CD14-positive monocyte (primary cell): ENCODE measurements at regions of chr1 and their contacts with region 1.

Region 1: DNA sequence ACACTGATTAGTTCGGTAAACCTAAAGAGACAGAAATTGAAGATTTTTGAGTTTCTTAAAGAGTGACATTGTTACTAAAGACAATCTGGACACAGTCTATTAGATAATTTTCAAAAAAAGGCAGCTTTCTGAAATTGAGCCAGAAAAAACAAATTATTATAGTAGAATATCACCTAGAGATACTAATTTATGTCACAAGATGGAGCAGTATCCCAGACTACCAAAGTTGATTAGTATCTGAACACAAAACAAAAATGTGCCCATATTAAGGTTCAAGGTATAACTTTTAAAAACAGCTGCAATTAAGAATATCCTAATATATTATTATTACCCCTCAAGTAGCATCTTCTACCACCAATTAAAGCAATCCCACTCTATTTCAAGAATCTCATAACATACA is 40.5 kb upstream of the SYT2 start:
- DNase-seq: no peak
- H3K4me3 ChIP-seq: no peak overlapping the region
- H3K4me3 Mint-ChIP-seq: no peak overlapping the region
- H3K27ac ChIP-seq: no peak overlapping the region
- H3K27ac Mint-ChIP-seq: no peak overlapping the region
- H3K4me1 ChIP-seq: peaks cover 2 to 8% of the 10 kb centered on the region in 2 donors
- H3K4me1 Mint-ChIP-seq: peaks cover 18% of the 10 kb centered on the region
- H3K27me3 ChIP-seq: no peaks in the 10 kb centered on the region
- H3K27me3 Mint-ChIP-seq: no peaks in the 10 kb centered on the region
- CTCF ChIP-seq: peak; percentile 12

Region 2: DNA sequence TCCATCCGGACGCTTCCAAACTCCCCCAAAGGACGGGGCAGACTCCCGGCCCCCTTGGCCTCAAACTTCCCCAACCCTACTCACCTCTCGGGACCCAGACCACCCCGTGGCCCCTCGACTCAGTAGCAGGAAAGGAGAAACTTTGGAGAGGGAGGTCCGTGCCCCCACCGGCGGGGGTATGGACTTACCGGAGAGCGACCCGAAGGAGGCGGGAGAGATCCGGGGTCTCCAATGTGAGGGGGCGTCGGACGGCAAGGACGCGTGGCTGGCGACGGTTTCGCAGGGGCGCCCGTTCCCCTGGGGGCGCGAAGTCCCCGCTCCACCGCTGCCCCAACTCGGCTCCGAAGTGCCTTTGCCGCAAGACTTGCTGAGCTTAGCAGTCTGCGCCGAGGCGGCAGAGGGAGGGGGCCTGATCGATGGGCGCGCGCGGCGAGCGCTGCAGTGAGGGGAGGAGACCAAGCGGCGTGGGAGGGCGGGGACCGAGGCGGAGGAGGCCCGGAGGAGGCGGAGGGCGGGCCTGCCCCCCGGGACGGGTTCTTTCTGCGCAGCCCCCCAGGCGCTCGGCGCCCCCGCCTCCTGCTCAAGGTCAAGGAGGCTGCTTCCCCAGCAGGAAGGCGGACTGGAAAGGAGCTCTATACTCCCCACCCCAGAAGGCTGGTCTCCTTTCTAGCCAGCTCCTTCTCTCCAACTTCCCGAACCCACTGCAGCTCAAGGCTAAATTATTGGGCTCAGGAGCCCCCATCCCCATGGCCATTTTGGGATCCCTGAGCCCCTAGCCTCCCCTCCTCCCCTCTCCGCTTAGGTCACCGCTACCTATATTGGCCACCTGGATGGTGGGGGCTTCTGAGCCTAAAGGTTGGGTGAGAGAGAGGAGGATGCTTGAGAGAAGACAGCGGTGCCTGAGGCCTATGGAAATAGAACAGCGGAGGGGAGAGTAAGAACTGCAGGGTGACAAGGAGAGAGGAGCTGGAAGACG is 40.4 kb before region 1 on chr1 and contains the start of gene SYT2:
- intact Hi-C with region 1: no loop called
- DNase-seq: no peak
- H3K4me3 ChIP-seq: no peak within 1 kb of the TSS
- H3K4me3 Mint-ChIP-seq: peak within 1 kb of the TSS in 1 of 2 donors; percentile 72
- H3K27ac ChIP-seq: no peak within 1 kb of the TSS
- H3K27ac Mint-ChIP-seq: no peak within 1 kb of the TSS
- H3K4me1 ChIP-seq: no peaks in the 10 kb centered on the region
- H3K4me1 Mint-ChIP-seq: peaks cover 2% of the 10 kb centered on the region
- H3K27me3 ChIP-seq: peaks cover 73 to 95% of the 10 kb centered on the region in 2 donors
- H3K27me3 Mint-ChIP-seq: peaks cover 88 to 95% (median 92%) of the 10 kb centered on the region in 3 donors
- CTCF ChIP-seq: no peak
- polyA plus RNA-seq, gene SYT2: not detected

Region 3: GRCh38 chr1:202791077-202791747 is 40.5 kb after region 1 on chr1:
- intact Hi-C with region 1: no loop called
- DNase-seq: no peak
- H3K4me3 ChIP-seq: no peak overlapping the region
- H3K4me3 Mint-ChIP-seq: no peak overlapping the region
- H3K27ac ChIP-seq: no peak overlapping the region
- H3K27ac Mint-ChIP-seq: peak overlapping the region in 2 of 7 donors; percentile 35 to 50
- H3K4me1 ChIP-seq: no peaks in the 10 kb centered on the region
- H3K4me1 Mint-ChIP-seq: peaks cover 8% of the 10 kb centered on the region
- H3K27me3 ChIP-seq: no peaks in the 10 kb centered on the region
- H3K27me3 Mint-ChIP-seq: peaks cover 0 to 1% (median 0%) of the 10 kb centered on the region in 3 donors
- CTCF ChIP-seq: no peak

Region 4: DNA sequence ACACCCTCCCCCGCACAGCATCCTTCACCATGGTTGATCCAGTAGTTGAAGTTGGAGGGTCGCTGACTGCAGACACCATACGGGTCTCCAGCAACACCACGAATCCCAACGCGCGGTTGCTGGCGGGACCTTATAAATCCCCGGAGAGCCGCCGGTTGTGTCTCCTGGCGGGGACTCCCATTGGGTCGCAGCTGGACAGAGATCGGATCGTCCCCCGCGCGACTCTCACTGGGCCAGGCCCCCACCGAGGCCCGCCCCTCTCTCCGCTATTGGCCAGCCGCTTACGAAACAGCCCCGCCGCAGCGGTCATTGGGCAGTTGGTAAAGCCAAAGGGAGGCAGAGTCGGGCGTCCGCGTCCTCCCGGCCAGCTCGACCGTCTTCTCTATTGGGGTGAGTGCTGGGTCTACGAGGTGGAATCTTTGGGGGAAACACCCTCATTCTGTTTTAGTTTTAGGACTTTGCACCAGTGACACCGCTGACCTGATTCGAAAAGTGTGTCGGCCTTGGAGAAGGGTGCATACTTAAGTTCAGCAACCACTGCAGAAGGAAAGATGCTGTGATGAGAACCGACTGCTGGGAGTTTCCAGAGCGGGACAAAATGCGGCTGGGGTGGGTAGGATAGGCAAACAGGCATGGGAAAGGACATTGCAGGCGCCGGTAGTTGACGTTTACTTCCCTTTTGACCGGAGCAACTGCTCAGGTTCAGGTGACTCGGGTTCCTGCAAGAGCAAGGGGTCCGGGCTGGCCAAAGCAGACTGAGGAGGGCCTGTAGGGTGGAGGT is 110.9 kb after region 1 on chr1:
- intact Hi-C with region 1: loop called in 1 of 2 experiments (anchors 10 kb)
- DNase-seq: peak; percentile 82 to 90 (median 85)
- H3K4me3 ChIP-seq: peak overlapping the region; percentile 32 to 83 (median 56)
- H3K4me3 Mint-ChIP-seq: peak overlapping the region; percentile 90 to 95
- H3K27ac ChIP-seq: no peak overlapping the region
- H3K27ac Mint-ChIP-seq: peak overlapping the region in 3 of 7 donors; percentile 37 to 75 (median 64)
- H3K4me1 ChIP-seq: peaks cover 33 to 37% of the 10 kb centered on the region in 2 donors
- H3K4me1 Mint-ChIP-seq: peaks cover 52% of the 10 kb centered on the region
- H3K27me3 ChIP-seq: peaks cover 0 to 12% of the 10 kb centered on the region in 2 donors
- H3K27me3 Mint-ChIP-seq: peaks cover 12 to 19% (median 16%) of the 10 kb centered on the region in 3 donors
- CTCF ChIP-seq: no peak

Region 5: DNA sequence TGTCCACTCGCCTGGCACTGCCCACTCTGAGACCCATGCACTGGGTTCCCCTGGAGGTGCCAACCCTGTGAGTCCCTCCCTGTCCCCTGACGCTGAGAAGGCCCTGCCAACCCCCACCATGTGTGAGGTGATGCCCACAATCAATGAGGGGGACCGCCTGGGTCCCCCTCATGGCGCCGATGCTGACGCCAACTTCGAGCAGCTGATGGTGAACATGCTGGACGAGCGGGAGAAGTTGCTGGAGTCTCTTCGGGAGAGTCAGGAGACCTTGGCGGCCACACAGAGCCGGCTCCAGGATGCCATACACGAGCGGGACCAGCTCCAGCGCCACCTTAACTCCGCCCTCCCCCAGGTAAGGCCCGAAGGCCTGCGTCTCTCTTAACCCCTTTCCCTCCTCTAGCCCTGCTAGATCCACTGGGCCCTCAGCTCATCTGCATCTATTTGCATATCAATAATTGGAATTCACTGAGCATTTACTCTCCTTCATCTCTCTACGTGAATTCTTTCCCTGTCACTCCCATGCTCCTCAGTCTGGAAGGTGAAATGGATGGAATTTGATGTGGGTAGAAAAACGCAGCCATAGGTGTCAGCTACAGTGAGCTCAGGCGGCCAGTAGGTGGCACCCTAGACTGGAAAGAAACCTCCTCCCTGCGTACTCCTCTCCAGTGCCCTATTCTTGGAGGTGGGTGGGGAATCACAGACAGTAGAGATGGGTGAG is 288.3 kb after region 1 on chr1:
- intact Hi-C with region 1: no loop called
- DNase-seq: peak; percentile 53 to 71 (median 68)
- H3K4me3 ChIP-seq: no peak overlapping the region
- H3K4me3 Mint-ChIP-seq: peak overlapping the region in 1 of 2 donors; percentile 35
- H3K27ac ChIP-seq: no peak overlapping the region
- H3K27ac Mint-ChIP-seq: no peak overlapping the region
- H3K4me1 ChIP-seq: no peaks in the 10 kb centered on the region
- H3K4me1 Mint-ChIP-seq: peaks cover 12% of the 10 kb centered on the region
- H3K27me3 ChIP-seq: peaks cover 0 to 2% of the 10 kb centered on the region in 2 donors
- H3K27me3 Mint-ChIP-seq: peaks cover 3 to 36% (median 17%) of the 10 kb centered on the region in 3 donors
- CTCF ChIP-seq: peak; percentile 95